ENCODE measurements at regions of chr7 and their contacts with region 1.

Region 1: GRCh38 chr7:23357190-23358093 is 58.3 kb downstream of the MALSU1 start:
- DNase-seq: no peak
- H3K4me3 Mint-ChIP-seq: peak overlapping the region; percentile 49
- H3K27ac Mint-ChIP-seq: peak overlapping the region; percentile 49
- H3K4me1 Mint-ChIP-seq: peaks cover 26% of the 10 kb centered on the region
- H3K27me3 Mint-ChIP-seq: peaks cover 48% of the 10 kb centered on the region

Region 2: GRCh38 chr7:22445140-22445743 is 912.2 kb before region 1 on chr7:
- intact Hi-C with region 1: loop called (anchors 2 kb)
- DNase-seq: no peak
- H3K4me3 Mint-ChIP-seq: no peak overlapping the region
- H3K27ac Mint-ChIP-seq: no peak overlapping the region
- H3K4me1 Mint-ChIP-seq: peaks cover 21% of the 10 kb centered on the region
- H3K27me3 Mint-ChIP-seq: peaks cover 8% of the 10 kb centered on the region

Region 3: DNA sequence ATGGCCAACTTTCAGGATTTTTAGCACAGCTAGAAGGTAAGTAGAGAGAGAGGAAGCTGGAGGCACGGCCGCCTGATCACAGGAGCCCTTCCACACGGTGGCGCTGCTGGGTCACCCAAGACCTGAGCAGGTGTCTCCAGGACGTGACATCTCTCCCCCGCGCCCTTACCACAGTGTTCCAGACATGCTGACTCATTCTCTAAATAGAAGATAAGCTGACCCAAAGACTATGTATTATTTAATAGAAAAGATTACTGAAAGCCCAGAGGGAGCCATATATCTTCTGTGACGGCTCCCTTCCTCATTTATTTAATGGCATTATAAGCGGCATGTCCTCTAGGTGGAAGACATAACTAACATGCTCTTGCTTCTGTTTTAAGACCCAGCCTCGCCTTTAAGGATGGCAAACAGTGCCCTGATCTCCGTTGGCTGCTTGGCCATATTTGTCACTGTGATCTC is 84.3 kb before region 1 on chr7:
- intact Hi-C with region 1: loop called (anchors 1 kb)
- DNase-seq: peak; percentile 80
- H3K4me3 Mint-ChIP-seq: peak overlapping the region; percentile 72
- H3K27ac Mint-ChIP-seq: peak overlapping the region; percentile 5
- H3K4me1 Mint-ChIP-seq: peaks cover 24% of the 10 kb centered on the region
- H3K27me3 Mint-ChIP-seq: peaks cover 4% of the 10 kb centered on the region

Region 4: DNA sequence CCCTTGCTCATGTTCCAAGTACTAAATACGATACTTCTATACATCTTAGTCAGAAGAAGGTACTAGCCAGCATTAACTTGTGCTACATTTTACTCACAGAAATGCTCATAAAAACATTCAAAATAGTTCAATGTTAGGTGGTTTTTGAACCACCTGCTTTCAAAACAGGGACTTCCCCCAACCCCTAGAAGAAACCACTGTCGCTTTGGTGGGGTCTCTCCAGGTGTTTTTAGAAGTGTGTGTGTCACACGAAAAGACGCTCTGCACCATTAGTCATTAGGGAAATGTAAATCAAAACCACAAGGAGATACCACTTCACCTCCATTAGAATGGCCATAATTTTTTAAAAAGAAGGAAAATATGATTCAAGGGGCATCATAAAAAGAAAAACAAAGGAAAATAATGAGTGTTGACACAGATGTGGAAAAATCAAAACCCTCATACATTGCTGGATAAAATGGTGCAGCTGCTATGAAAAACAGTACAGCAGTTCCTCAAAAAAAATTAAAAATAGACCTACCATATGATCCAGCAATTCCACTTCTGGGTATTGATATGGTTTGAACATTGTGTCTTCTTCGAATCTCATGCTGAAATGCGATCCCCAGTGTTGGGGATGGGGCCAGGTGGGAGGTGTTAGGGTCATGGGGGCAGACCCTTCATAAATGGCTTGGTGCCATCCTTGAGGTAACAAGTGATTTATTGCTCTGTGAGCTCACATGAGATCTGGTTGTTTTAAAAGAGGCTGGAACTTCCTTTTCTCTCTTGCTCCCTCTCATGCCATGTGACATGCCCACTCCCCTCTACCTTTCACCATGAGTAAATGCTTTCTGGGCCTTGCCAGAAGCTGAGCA is 15.9 kb after region 1 on chr7:
- intact Hi-C with region 1: loop called (anchors 1 kb)
- DNase-seq: no peak
- H3K4me3 Mint-ChIP-seq: peak overlapping the region; percentile 9
- H3K27ac Mint-ChIP-seq: peak overlapping the region; percentile 94
- H3K4me1 Mint-ChIP-seq: peaks cover 49% of the 10 kb centered on the region
- H3K27me3 Mint-ChIP-seq: peaks cover 6% of the 10 kb centered on the region

Region 5: GRCh38 chr7:23419845-23420244 is 62.4 kb after region 1 on chr7:
- intact Hi-C with region 1: loop called (anchors 1 kb)
- DNase-seq: no peak
- H3K4me3 Mint-ChIP-seq: no peak overlapping the region
- H3K27ac Mint-ChIP-seq: no peak overlapping the region
- H3K4me1 Mint-ChIP-seq: peaks cover 7% of the 10 kb centered on the region
- H3K27me3 Mint-ChIP-seq: peaks cover 9% of the 10 kb centered on the region

Region 6: GRCh38 chr7:24572997-24573625 is 1215.7 kb after region 1 on chr7 and contains the start of gene PALS2:
- intact Hi-C with region 1: loop called (anchors 10 kb)
- DNase-seq: peak; percentile 77
- H3K4me3 Mint-ChIP-seq: peak within 1 kb of the TSS; percentile 94
- H3K27ac Mint-ChIP-seq: peak within 1 kb of the TSS; percentile 84
- H3K4me1 Mint-ChIP-seq: peaks cover 29% of the 10 kb centered on the region
- H3K27me3 Mint-ChIP-seq: peaks cover 41% of the 10 kb centered on the region
- total RNA-seq, gene PALS2: 34.9 and 42.2 TPM in 2 replicates